Breast epithelium (tissue), 4 donors: ENCODE measurements at regions of chr2 and their contacts with region 1.

Region 1: GRCh38 chr2:42928692-42929545 is 136.5 kb upstream of the HAAO start:
- DNase-seq: no peak
- H3K4me3 ChIP-seq: no peak overlapping the region
- H3K27ac ChIP-seq: peak overlapping the region; percentile 91 to 96
- H3K4me1 ChIP-seq: peaks cover 54 to 76% of the 10 kb centered on the region in 2 donors
- H3K27me3 ChIP-seq: no peaks in the 10 kb centered on the region
- CTCF ChIP-seq: peak in 1 of 3 donors; percentile 9
- POLR2A ChIP-seq: no peak

Region 2: GRCh38 chr2:41448221-41448620 is 1480.7 kb before region 1 on chr2:
- intact Hi-C with region 1: no loop called
- DNase-seq: no peak
- H3K4me3 ChIP-seq: no peak overlapping the region
- H3K27ac ChIP-seq: no peak overlapping the region
- H3K4me1 ChIP-seq: no peaks in the 10 kb centered on the region
- H3K27me3 ChIP-seq: no peaks in the 10 kb centered on the region
- CTCF ChIP-seq: no peak
- POLR2A ChIP-seq: no peak

Region 3: GRCh38 chr2:42072349-42073118 is 856.4 kb before region 1 on chr2:
- intact Hi-C with region 1: no loop called
- DNase-seq: no peak
- H3K4me3 ChIP-seq: no peak overlapping the region
- H3K27ac ChIP-seq: no peak overlapping the region
- H3K4me1 ChIP-seq: no peaks in the 10 kb centered on the region
- H3K27me3 ChIP-seq: no peaks in the 10 kb centered on the region
- CTCF ChIP-seq: no peak
- POLR2A ChIP-seq: no peak

Region 4: GRCh38 chr2:42859006-42859552 is 69.8 kb before region 1 on chr2:
- intact Hi-C with region 1: loop called (anchors 10 kb)
- DNase-seq: no peak
- H3K4me3 ChIP-seq: no peak overlapping the region
- H3K27ac ChIP-seq: no peak overlapping the region
- H3K4me1 ChIP-seq: no peaks in the 10 kb centered on the region
- H3K27me3 ChIP-seq: no peaks in the 10 kb centered on the region
- CTCF ChIP-seq: peak; percentile 82 to 90 (median 82)
- POLR2A ChIP-seq: no peak

Region 5: DNA sequence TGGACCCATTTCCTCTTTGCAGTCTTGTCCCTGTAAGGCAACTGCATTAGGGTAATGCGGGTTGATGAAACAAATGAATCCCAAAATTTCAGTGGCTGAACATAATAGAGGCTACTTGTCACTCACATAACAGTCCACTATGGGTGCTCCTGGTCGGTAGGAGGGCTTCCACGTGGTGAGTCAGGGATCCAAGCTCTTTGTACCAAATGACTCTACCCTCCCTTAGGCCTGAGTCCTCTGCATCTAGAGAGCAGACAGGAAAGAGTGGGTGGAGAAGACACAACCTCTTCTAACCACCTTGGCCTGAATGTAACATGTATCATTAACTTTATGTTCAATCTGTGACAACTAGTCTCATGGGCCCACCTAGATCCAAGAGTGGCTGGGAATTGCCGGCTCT is 50.3 kb before region 1 on chr2:
- intact Hi-C with region 1: loop called (anchors 10 kb)
- DNase-seq: no peak
- H3K4me3 ChIP-seq: no peak overlapping the region
- H3K27ac ChIP-seq: peak overlapping the region; percentile 71 to 85
- H3K4me1 ChIP-seq: peaks cover 17 to 21% of the 10 kb centered on the region in 2 donors
- H3K27me3 ChIP-seq: no peaks in the 10 kb centered on the region
- CTCF ChIP-seq: no peak
- POLR2A ChIP-seq: no peak

Region 6: GRCh38 chr2:42965910-42966309 is 37.0 kb after region 1 on chr2:
- intact Hi-C with region 1: loop called (anchors 1 kb)
- DNase-seq: no peak
- H3K4me3 ChIP-seq: no peak overlapping the region
- H3K27ac ChIP-seq: peak overlapping the region; percentile 38 to 56
- H3K4me1 ChIP-seq: peaks cover 6 to 12% of the 10 kb centered on the region in 2 donors
- H3K27me3 ChIP-seq: no peaks in the 10 kb centered on the region
- CTCF ChIP-seq: no peak
- POLR2A ChIP-seq: no peak

Region 7: DNA sequence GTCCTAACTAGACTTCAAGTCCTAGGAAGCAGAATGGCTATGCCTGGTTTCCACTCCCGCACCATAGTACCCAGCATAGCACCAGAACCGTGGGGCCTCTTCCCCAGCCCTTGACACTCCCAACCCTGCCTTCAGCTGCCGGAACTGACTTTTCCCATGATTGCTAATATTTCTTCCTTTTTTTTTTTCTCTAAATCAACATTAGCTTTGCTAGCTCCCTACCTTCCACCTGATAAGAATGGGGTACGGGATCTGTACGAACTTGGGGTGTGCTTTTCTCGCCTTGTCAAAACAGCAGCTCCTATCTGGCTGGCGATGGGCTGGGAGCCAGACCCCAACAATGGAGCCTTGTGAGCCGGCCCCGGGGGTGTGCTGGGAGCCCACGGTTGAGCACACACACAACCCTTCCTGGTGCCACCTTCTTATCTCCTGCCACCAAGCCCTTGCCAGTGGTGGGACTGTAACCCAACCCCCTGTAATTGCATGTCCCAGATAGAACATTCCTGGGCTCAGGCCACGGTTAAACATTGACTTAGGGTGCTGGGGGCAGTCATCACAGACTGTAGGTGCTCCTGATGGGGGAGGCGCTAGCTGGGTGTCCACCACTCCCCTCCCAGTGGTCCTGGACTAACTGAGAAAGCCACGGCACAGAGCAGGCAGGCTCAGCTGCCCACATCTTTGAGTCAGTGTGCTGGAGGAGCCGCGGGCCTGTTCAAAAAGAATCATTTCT is 76.5 kb after region 1 on chr2:
- intact Hi-C with region 1: no loop called
- DNase-seq: no peak
- H3K4me3 ChIP-seq: no peak overlapping the region
- H3K27ac ChIP-seq: no peak overlapping the region
- H3K4me1 ChIP-seq: no peaks in the 10 kb centered on the region
- H3K27me3 ChIP-seq: no peaks in the 10 kb centered on the region
- CTCF ChIP-seq: no peak
- POLR2A ChIP-seq: no peak